Spleen (tissue), 13 donors: ENCODE measurements at regions of chr11 and their contacts with region 1.

Region 1: GRCh38 chr11:9363954-9364912 is 20.2 kb upstream of the IPO7 start:
- DNase-seq: peak; percentile 97
- H3K4me3 ChIP-seq: peak overlapping the region; percentile 20 to 70 (median 44)
- H3K27ac ChIP-seq: peak overlapping the region; percentile 76 to 98 (median 94)
- H3K4me1 ChIP-seq: peaks cover 0 to 17% (median 10%) of the 10 kb centered on the region in 6 donors
- H3K27me3 ChIP-seq: no peaks in the 10 kb centered on the region
- CTCF ChIP-seq: peak in 3 of 11 experiments; percentile 9 to 48 (median 25)
- POLR2A ChIP-seq: peak in 2 of 3 donors; percentile 65 to 70

Region 2: GRCh38 chr11:8948886-8949285 is 415.3 kb before region 1 on chr11:
- intact Hi-C with region 1: no loop called
- DNase-seq: no peak
- H3K4me3 ChIP-seq: no peak overlapping the region
- H3K27ac ChIP-seq: peak overlapping the region in 4 of 8 donors; percentile 6 to 39 (median 24)
- H3K4me1 ChIP-seq: peaks cover 0 to 7% (median 0%) of the 10 kb centered on the region in 6 donors
- H3K27me3 ChIP-seq: no peaks in the 10 kb centered on the region
- CTCF ChIP-seq: no peak
- POLR2A ChIP-seq: no peak

Region 3: GRCh38 chr11:9203691-9204311 is 160.4 kb before region 1 on chr11:
- intact Hi-C with region 1: no loop called
- DNase-seq: no peak
- H3K4me3 ChIP-seq: no peak overlapping the region
- H3K27ac ChIP-seq: no peak overlapping the region
- H3K4me1 ChIP-seq: peaks cover 0 to 17% (median 3%) of the 10 kb centered on the region in 6 donors
- H3K27me3 ChIP-seq: no peaks in the 10 kb centered on the region
- CTCF ChIP-seq: peak in 1 of 11 experiments; percentile 23
- POLR2A ChIP-seq: no peak

Region 4: GRCh38 chr11:9314291-9315036 is 49.8 kb before region 1 on chr11 and contains the start of gene TMEM41B:
- intact Hi-C with region 1: loop called (anchors 10 kb)
- DNase-seq: peak; percentile 100
- H3K4me3 ChIP-seq: peak within 1 kb of the TSS; percentile 81 to 98 (median 94)
- H3K27ac ChIP-seq: peak within 1 kb of the TSS; percentile 85 to 95 (median 90)
- H3K4me1 ChIP-seq: peaks cover 9 to 47% (median 31%) of the 10 kb centered on the region in 6 donors
- H3K27me3 ChIP-seq: peaks cover 0 to 6% (median 0%) of the 10 kb centered on the region in 7 donors
- CTCF ChIP-seq: peak in 6 of 11 experiments; percentile 22 to 58 (median 50)
- POLR2A ChIP-seq: peak in 1 of 3 donors; percentile 60
- total RNA-seq, gene TMEM41B: 22.0 to 29.4 (median 25.7) TPM